ENCODE measurements at regions of chr2 and their contacts with region 1.

Region 1: GRCh38 chr2:210399440-210400041 is 77.0 kb downstream of the LANCL1 start:
- DNase-seq: no peak
- ATAC-seq: peak; percentile 52
- H3K4me3 ChIP-seq: no peak overlapping the region
- H3K27ac ChIP-seq: no peak overlapping the region
- H3K4me1 ChIP-seq: no peaks in the 10 kb centered on the region
- H3K27me3 ChIP-seq: no peaks in the 10 kb centered on the region
- CTCF ChIP-seq: peak in 2 of 3 experiments; percentile 18 to 26; a peak in 2 of 6 replicates
- EP300 ChIP-seq: no peak
- POLR2A ChIP-seq: no peak
- RAD21 ChIP-seq: peak; percentile 25; the same call in 1 of the 2 replicates

Region 2: DNA sequence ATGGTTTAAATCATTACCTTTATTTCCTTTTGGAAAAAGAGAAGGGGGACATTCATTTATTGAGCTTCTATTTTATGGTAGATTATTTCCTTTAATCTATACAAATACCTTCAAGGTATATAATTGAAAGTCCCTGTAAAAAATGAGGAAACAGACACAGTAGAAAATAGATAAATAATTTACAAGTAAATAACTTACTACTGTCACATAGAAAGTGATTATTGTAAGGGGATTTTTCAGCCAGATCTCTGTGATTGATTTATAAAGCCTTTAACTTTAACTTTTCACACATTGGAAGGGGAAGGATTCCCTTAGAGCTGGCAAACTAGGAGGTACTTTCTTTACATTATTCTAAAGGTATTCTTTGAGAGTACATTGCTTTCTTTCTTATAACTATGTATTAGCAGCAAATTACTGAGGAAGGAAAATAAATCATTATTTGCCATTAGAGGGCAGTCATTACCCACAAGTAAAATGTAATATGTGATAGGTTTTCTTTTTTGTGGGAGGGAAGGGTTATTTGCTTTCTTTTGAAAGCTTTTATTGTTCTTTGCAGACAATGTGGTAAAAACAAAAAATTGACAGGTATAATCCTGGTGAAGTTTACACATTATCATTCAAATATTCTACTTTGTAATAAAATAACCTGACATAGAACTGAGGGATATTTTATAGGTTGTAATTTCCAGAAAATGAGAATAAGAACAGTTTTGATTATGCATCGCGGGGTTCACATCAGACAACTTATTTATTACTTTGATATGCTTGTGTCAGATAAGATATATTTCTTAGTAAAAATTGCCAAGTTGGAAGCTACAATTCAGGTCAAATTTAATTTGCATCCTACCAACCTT is 421.9 kb before region 1 on chr2:
- CTCF ChIA-PET with region 1: interaction called, 9 read pairs
- POLR2A ChIA-PET with region 1: no interaction called
- RAD21 ChIA-PET with region 1: no interaction called
- SMC1A ChIA-PET with region 1: interaction called, 3 read pairs
- in situ Hi-C with region 1: no loop called
- intact Hi-C with region 1: loop called (anchors 1 kb)
- DNase-seq: peak; percentile 21
- ATAC-seq: peak; percentile 76
- H3K4me3 ChIP-seq: no peak overlapping the region
- H3K27ac ChIP-seq: no peak overlapping the region
- H3K4me1 ChIP-seq: no peaks in the 10 kb centered on the region
- H3K27me3 ChIP-seq: no peaks in the 10 kb centered on the region
- CTCF ChIP-seq: peak in 2 of 3 experiments; percentile 32 to 61; a peak in 2 of 6 replicates
- EP300 ChIP-seq: no peak
- POLR2A ChIP-seq: no peak
- RAD21 ChIP-seq: peak; percentile 77

Region 3: DNA sequence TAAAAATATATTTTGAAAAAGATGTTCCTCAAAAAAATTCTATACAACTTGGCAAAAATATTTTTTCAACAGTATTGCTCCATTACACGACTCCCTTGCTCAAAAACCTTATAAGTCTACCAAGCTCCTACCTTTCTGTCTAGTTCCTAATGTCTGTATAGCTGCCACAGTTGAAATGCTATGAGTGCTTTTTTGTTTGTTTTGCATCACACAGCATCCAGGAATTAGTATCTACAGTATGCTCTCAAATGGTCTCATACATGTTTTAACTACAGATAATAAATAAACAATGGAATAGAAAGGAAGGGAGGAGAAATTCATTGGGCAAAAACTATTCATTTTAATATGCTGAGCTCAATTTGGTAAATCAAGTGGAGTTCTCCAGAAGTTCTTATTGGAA is 191.6 kb before region 1 on chr2:
- CTCF ChIA-PET with region 1: no interaction called
- POLR2A ChIA-PET with region 1: no interaction called
- RAD21 ChIA-PET with region 1: no interaction called
- SMC1A ChIA-PET with region 1: no interaction called
- in situ Hi-C with region 1: no loop called
- intact Hi-C with region 1: no loop called
- DNase-seq: no peak
- ATAC-seq: no peak
- H3K4me3 ChIP-seq: no peak overlapping the region
- H3K27ac ChIP-seq: no peak overlapping the region
- H3K4me1 ChIP-seq: no peaks in the 10 kb centered on the region
- H3K27me3 ChIP-seq: no peaks in the 10 kb centered on the region
- CTCF ChIP-seq: no peak
- EP300 ChIP-seq: no peak
- POLR2A ChIP-seq: no peak
- RAD21 ChIP-seq: no peak

Region 4: GRCh38 chr2:210252699-210253606 is 146.6 kb before region 1 on chr2:
- CTCF ChIA-PET with region 1: interaction called, 50 read pairs
- POLR2A ChIA-PET with region 1: no interaction called
- RAD21 ChIA-PET with region 1: interaction called, 34 read pairs
- SMC1A ChIA-PET with region 1: interaction called, 33 read pairs
- in situ Hi-C with region 1: loop called (anchors 10 kb)
- intact Hi-C with region 1: loop called (anchors 2 kb)
- DNase-seq: no peak
- ATAC-seq: peak; percentile 19; the same call in 2 of the 3 replicates
- H3K4me3 ChIP-seq: no peak overlapping the region
- H3K27ac ChIP-seq: no peak overlapping the region
- H3K4me1 ChIP-seq: no peaks in the 10 kb centered on the region
- H3K27me3 ChIP-seq: no peaks in the 10 kb centered on the region
- CTCF ChIP-seq: no peak
- EP300 ChIP-seq: no peak
- POLR2A ChIP-seq: no peak
- RAD21 ChIP-seq: no peak

Region 5: DNA sequence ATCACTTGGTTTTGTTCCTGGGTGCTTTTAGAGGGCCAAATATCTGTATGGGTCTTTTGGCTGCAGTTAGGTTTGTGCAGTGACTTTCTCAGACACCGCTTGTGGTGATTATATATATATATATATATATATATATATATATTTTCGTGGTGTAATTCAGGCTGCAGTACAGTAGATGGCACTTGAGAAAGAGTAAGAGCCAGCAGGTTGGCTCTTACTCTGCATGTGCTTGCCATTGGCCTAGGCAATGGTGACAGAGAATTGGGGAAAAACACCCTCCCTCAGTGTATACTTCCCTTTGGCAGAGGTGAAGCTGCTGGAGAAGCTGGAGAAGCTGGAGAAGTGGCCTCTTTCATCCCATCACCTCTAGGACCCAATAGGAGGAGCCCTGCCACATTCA is 62.4 kb before region 1 on chr2:
- CTCF ChIA-PET with region 1: interaction called, 11 read pairs
- POLR2A ChIA-PET with region 1: no interaction called
- RAD21 ChIA-PET with region 1: interaction called, 6 read pairs
- SMC1A ChIA-PET with region 1: interaction called, 3 read pairs
- in situ Hi-C with region 1: no loop called
- intact Hi-C with region 1: no loop called
- DNase-seq: no peak
- ATAC-seq: 0 out of 3 replicates have a peak, but pooled peaks have one; percentile 30
- H3K4me3 ChIP-seq: no peak overlapping the region
- H3K27ac ChIP-seq: no peak overlapping the region
- H3K4me1 ChIP-seq: no peaks in the 10 kb centered on the region
- H3K27me3 ChIP-seq: no peaks in the 10 kb centered on the region
- CTCF ChIP-seq: no peak
- EP300 ChIP-seq: no peak
- POLR2A ChIP-seq: no peak
- RAD21 ChIP-seq: no peak

Region 6: GRCh38 chr2:210363271-210363670 is 36.3 kb before region 1 on chr2:
- CTCF ChIA-PET with region 1: interaction called, 12 read pairs
- POLR2A ChIA-PET with region 1: no interaction called
- RAD21 ChIA-PET with region 1: interaction called, 11 read pairs
- SMC1A ChIA-PET with region 1: interaction called, 14 read pairs
- in situ Hi-C with region 1: no loop called
- intact Hi-C with region 1: no loop called
- DNase-seq: no peak
- ATAC-seq: peak; percentile 71
- H3K4me3 ChIP-seq: no peak overlapping the region
- H3K27ac ChIP-seq: no peak overlapping the region
- H3K4me1 ChIP-seq: no peaks in the 10 kb centered on the region
- H3K27me3 ChIP-seq: no peaks in the 10 kb centered on the region; a peak in 1 of 4 replicates
- CTCF ChIP-seq: peak; percentile 16 to 27 (median 22); a peak in 3 of 6 replicates
- EP300 ChIP-seq: no peak
- POLR2A ChIP-seq: no peak
- RAD21 ChIP-seq: no peak

Region 7: GRCh38 chr2:210410542-210410941 is 11.0 kb after region 1 on chr2:
- CTCF ChIA-PET with region 1: interaction called, 12 read pairs
- POLR2A ChIA-PET with region 1: no interaction called
- RAD21 ChIA-PET with region 1: interaction called, 5 read pairs
- SMC1A ChIA-PET with region 1: interaction called, 3 read pairs
- in situ Hi-C with region 1: no loop called
- intact Hi-C with region 1: no loop called
- DNase-seq: no peak
- ATAC-seq: no peak
- H3K4me3 ChIP-seq: no peak overlapping the region
- H3K27ac ChIP-seq: no peak overlapping the region
- H3K4me1 ChIP-seq: no peaks in the 10 kb centered on the region
- H3K27me3 ChIP-seq: no peaks in the 10 kb centered on the region; a peak in 1 of 4 replicates
- CTCF ChIP-seq: no peak
- EP300 ChIP-seq: no peak
- POLR2A ChIP-seq: no peak
- RAD21 ChIP-seq: no peak

Measured in GM12878 (cell line).